BJ (cell line): ENCODE measurements at regions of chr6 and their contacts with region 1.

Region 1: DNA sequence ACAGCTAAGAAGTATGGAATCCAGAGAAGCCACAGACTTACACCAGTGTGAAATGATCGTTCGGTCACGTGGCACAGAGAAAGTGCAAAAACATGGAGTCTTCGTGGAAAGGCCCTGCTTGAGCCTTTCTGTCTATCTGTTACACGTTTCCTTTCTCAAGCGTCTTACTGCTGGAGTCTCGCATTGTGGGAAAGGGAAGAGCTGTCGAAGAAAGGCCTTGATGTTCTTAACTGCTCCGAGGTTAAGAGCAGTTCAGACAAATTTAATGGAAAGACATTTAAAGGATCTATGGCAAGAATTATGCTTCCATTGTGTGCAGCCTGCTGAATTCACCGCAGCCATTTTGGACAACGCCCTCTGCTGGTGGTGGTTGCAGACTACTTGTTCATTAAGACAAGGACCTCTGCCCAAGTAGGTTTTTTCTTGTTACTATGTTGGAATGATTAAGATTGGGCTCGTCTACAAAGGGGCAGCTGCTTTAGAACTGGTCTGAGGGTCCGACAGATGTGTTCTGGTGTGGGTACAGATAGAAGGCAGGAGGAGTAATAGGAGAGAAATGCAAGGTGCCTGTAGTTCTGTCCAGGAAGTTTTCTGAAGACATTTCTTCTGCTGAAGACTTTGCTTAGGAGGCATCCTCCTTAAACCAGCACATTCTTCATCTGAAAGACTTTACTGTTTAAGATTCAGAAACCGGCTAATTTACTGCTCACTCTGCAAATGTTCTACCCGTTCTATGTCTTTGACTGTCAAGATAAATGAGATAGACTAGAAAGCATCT is 24.7 kb upstream of the CCN6 start:
- DNase-seq: no peak
- H3K4me3 ChIP-seq: no peak overlapping the region
- H3K27me3 ChIP-seq: peaks cover 5% of the 10 kb centered on the region; the same call in 1 of the 2 replicates
- CTCF ChIP-seq: peak; percentile 59

Region 2: DNA sequence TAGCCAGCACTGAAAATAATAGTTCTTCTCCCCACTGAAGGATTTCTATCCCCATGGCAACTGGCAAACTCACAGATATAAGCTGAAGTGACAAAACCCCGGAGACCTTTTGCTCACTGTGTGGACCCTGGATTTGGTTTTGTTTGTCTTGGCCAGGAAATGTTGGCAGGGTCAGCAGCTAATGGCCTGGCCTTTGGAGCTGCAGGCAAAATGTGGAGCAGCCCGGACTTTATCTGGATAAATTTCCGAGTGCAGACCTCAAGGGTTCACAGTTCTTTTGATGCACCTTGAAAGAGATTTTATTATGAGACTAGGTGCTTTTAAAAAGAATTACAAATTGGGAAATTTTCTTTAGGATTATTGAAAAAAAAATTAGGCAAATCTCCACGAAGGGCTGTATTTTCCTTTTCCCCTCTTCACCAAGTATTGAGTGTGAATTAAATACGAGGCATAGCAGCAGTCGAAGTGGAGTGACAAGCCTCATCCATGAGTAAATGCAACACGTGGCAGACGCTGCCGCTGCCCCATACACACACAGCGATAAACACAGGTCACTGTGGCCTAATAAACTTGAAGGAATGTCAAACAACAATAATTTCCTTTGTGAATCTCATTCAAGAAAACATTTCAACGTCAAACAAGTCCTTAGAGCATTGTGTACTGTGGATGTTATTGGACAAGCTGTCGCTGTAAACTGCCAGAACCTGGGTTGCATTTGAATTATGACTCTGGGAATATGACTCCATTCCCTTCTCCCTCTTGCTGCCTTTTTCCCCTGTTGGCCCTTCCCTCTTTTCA is 10.4 kb before region 1 on chr6:
- CTCF ChIA-PET with region 1: interaction called, 23 read pairs
- POLR2A ChIA-PET with region 1: no interaction called
- DNase-seq: no peak
- H3K4me3 ChIP-seq: no peak overlapping the region
- H3K27me3 ChIP-seq: no peaks in the 10 kb centered on the region
- CTCF ChIP-seq: no peak

Region 3: GRCh38 chr6:112054555-112055160 is 25.4 kb after region 1 on chr6:
- CTCF ChIA-PET with region 1: no interaction called
- POLR2A ChIA-PET with region 1: no interaction called
- DNase-seq: no peak
- H3K4me3 ChIP-seq: no peak overlapping the region
- H3K27me3 ChIP-seq: no peaks in the 10 kb centered on the region
- CTCF ChIP-seq: no peak